GM13977 (cell line): ENCODE measurements at regions of chr3 and their contacts with region 1.

Region 1: GRCh38 chr3:39990532-39990931 is 181.1 kb downstream of the MYRIP start:
- DNase-seq: peak; percentile 47
- CTCF ChIP-seq: peak; percentile 66

Region 2: DNA sequence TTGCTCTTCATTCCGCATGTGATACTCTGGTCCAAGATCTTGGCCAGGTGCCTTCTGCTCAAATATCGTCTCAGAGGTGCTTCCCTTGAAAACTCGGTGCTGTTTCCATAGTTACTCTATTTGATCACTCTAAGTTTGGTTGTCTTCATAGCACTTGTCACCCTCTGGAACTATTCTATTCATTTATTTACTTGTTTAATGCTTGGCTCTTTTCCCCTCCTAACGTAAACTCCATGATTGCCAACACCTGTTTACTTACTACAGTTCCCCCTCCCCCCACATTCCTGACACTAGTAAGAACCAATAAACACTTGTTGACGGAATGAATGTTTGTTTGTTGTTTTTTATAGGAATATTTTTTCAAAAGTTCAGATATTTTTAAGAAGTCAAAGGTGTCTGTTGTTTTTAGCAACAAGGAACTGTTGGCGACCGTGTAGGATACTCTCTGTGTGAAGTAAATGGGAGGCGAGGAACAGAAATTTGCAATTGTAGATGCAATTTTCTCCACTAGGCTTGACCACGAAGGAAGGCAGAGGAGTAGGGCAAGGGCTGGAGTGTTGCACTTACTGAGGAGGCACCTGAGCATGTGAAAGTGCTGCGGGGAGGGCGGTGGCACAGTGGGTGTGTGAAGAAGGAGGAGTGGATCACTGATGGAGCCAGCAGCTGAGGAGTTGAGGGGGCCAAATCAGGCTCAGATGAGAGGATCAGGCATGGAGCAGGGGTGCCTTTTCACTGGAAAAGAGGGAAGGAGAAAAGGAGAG is 474.7 kb before region 1 on chr3:
- in situ Hi-C with region 1: no loop called
- DNase-seq: no peak
- CTCF ChIP-seq: no peak

Region 3: GRCh38 chr3:39644176-39644575 is 346.4 kb before region 1 on chr3:
- in situ Hi-C with region 1: no loop called
- DNase-seq: no peak
- CTCF ChIP-seq: no peak

Region 4: DNA sequence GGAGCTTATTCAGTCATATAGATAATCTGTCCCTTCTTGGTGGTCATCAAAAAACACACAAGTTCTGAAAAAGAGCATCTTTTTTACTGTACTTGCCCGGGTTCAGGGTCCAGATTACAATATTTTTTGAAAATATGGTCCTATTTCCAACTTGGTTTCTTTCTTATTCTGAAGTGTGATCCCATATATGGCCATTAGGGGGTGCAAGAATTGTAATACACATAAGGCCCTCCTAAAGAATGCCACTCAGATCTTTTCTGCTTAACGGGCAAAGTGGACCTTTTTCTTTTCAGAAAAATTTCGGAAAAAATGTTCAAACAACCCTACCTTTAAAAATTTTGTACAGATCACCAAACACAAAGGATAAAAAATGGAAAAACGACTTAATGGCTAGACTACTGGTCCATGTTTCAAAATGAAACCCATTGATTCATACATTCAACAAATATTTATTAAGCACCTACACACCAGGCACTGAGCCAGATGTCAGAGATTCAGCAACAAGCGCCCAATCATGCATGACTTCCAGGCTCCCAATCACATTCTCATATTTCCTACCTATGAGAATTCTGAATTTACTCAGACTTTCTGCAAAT is 283.1 kb before region 1 on chr3:
- in situ Hi-C with region 1: loop called (anchors 25 kb)
- DNase-seq: peak; percentile 61
- CTCF ChIP-seq: peak; percentile 60